Activated CD8-positive, alpha-beta T cell treated with anti-CD3 and anti-CD28 coated beads, Interleukin-2, amount 10 ng/mL, durations not matched to agents 7 days and 5 days (primary cell): ENCODE measurements at regions of chr5 and their contacts with region 1.

Region 1: GRCh38 chr5:58460732-58461286 is 923 bp upstream of the PLK2 start:
- DNase-seq: peak; percentile 91
- ATAC-seq: peak; percentile 76
- H3K4me3 Mint-ChIP-seq: peak overlapping the region; percentile 74
- H3K27ac Mint-ChIP-seq: peak overlapping the region; percentile 30
- H3K4me1 Mint-ChIP-seq: peaks cover 24% of the 10 kb centered on the region
- H3K27me3 Mint-ChIP-seq: peaks cover 31% of the 10 kb centered on the region

Region 2: DNA sequence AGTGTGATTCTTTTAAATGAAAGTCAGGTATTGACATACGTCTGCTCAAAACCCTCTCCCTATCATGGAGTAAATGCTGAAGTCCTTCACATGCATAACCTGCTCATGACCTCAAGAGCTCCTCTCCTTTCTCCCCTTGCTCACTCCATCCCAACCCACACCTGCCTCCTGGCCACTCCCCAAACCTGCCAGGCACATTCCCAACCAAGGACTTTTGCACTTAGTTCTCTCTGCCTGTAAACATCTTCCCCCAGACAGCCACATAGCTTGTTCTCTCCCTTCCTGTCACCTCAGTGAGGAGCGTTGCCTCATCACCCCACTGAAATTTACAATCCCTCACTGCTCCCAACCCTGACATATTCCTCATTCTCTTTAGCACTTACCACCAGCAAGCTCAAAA is 1542.8 kb before region 1 on chr5:
- CTCF ChIA-PET with region 1: no interaction called
- POLR2A ChIA-PET with region 1: no interaction called
- DNase-seq: no peak
- ATAC-seq: no peak
- H3K4me3 Mint-ChIP-seq: no peak overlapping the region
- H3K27ac Mint-ChIP-seq: peak overlapping the region; percentile 5
- H3K4me1 Mint-ChIP-seq: peaks cover 7% of the 10 kb centered on the region
- H3K27me3 Mint-ChIP-seq: no peaks in the 10 kb centered on the region

Region 3: GRCh38 chr5:57298295-57298984 is 1162.4 kb before region 1 on chr5:
- CTCF ChIA-PET with region 1: interaction called, 121 read pairs
- POLR2A ChIA-PET with region 1: no interaction called
- DNase-seq: peak; percentile 91
- ATAC-seq: peak; percentile 88
- H3K4me3 Mint-ChIP-seq: peak overlapping the region; percentile 56
- H3K27ac Mint-ChIP-seq: no peak overlapping the region
- H3K4me1 Mint-ChIP-seq: peaks cover 13% of the 10 kb centered on the region
- H3K27me3 Mint-ChIP-seq: peaks cover 4% of the 10 kb centered on the region

Region 4: DNA sequence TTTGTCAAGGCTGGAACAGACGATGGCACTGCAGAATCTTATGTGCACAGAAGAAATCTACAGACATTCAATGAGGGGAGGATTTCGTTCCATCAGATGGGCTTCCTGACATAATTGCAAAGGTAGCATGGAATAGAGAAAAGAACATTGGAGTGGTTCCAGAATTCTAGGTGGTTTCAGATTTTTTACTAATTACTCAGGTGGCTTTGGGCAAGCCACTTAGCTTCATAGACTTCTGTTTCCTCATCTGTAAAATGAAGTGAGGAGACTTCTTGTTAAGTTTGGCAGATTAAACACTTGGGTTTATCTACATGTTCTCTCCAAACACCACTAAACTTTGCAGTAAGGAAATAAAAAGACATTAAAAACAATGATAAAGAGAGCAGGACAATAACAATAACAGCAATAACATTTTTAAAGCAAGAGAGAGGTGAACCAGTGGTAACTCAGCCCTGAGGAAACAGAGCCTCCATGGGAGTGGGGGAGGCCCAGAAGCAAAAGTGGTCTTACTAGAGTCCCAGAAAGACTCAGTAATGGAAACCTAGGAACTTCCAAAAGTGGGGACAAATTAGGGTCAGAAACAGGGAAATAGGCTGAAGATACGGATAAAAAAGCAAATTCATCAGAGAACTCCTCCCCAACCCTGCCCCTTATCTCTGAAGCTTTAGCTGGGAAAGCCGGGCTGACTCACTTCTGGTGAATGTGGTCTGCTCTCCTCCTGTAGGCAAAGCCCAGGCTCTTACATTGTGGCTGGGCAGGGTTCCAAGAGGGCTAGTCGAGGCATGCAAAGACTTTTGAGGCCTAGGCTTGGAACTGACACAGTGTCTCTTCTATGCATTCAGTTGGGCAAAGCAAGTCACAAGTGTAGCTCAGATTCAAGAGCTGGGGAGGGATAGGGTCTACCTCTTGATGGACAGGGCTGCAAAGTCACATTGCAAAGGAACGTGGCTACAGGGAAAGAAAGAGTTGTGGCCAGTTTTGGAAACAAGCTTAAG is 966.4 kb before region 1 on chr5:
- CTCF ChIA-PET with region 1: interaction called, 72 read pairs
- POLR2A ChIA-PET with region 1: no interaction called
- DNase-seq: peak; percentile 46
- ATAC-seq: peak; percentile 55
- H3K4me3 Mint-ChIP-seq: peak overlapping the region; percentile 12
- H3K27ac Mint-ChIP-seq: peak overlapping the region; percentile 76
- H3K4me1 Mint-ChIP-seq: peaks cover 35% of the 10 kb centered on the region
- H3K27me3 Mint-ChIP-seq: peaks cover 13% of the 10 kb centered on the region

Region 5: GRCh38 chr5:57499262-57500050 is 961.4 kb before region 1 on chr5:
- CTCF ChIA-PET with region 1: interaction called, 72 read pairs
- POLR2A ChIA-PET with region 1: no interaction called
- DNase-seq: peak; percentile 26
- ATAC-seq: peak; percentile 70
- H3K4me3 Mint-ChIP-seq: peak overlapping the region; percentile 54
- H3K27ac Mint-ChIP-seq: no peak overlapping the region
- H3K4me1 Mint-ChIP-seq: peaks cover 33% of the 10 kb centered on the region
- H3K27me3 Mint-ChIP-seq: peaks cover 14% of the 10 kb centered on the region

Region 6: GRCh38 chr5:57650360-57651069 is 810.3 kb before region 1 on chr5:
- CTCF ChIA-PET with region 1: interaction called, 22 read pairs
- POLR2A ChIA-PET with region 1: no interaction called
- DNase-seq: peak; percentile 27
- ATAC-seq: no peak
- H3K4me3 Mint-ChIP-seq: no peak overlapping the region
- H3K27ac Mint-ChIP-seq: no peak overlapping the region
- H3K4me1 Mint-ChIP-seq: no peaks in the 10 kb centered on the region
- H3K27me3 Mint-ChIP-seq: peaks cover 3% of the 10 kb centered on the region

Region 7: DNA sequence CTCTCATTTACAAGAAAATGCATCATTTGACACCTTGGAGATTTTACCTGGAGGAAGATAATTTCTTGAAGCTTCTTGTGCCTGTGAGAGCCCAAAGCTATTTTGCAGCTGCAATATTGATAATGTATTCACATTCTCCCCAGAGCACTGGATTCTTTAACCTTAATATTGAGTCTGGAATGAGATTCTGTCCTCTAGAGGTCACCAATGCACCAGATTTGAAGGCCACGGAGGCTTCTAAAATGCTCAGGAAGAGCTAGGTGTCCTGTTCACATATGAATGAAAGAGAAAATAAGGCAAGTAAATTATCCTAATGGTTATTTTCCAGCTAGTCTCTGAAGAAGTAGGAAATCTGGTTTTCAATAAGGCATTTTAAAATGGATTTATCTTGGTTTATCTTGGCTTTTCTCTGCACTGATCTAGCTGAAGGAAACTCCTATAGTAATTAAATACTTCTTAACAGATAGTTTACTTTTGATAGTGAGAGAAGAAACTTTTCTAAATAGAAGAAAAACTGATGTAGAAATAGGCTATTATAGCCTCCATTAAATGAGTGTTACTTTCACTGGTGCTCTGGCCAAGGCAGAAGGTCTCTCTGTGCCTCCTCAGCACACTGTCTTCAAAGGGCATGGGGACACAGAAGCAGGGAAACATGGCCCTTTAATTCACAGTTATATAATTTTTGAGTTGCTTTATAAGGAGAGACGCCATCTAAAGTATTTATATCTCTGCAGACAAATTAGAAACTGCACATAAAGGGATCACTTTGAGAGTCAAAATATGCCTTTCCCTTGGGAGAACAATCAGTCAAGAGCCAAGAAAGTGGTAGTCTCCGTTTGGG is 681.2 kb before region 1 on chr5:
- CTCF ChIA-PET with region 1: interaction called, 43 read pairs
- POLR2A ChIA-PET with region 1: interaction called, 3 read pairs
- DNase-seq: peak; percentile 26
- ATAC-seq: no peak
- H3K4me3 Mint-ChIP-seq: no peak overlapping the region
- H3K27ac Mint-ChIP-seq: no peak overlapping the region
- H3K4me1 Mint-ChIP-seq: no peaks in the 10 kb centered on the region
- H3K27me3 Mint-ChIP-seq: no peaks in the 10 kb centered on the region

Region 8: DNA sequence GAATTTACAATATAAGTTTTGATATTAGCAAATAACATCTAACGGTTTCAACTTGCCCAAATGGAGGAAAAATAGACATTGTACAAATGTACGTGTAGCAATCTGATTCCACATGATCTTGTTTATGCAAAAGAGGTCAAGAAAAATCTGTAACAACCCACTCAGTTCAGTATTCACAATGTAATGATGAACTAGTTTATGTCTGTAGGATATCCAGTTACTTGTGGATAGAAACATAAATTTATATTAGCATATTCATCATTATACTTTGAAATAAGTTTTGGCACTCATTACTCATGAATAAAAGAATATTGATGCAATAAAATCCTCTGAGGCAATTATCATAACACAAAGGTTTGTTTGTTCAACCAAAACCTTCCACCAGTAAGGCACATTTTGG is 29.0 kb before region 1 on chr5:
- CTCF ChIA-PET with region 1: no interaction called
- POLR2A ChIA-PET with region 1: no interaction called
- DNase-seq: no peak
- ATAC-seq: no peak
- H3K4me3 Mint-ChIP-seq: no peak overlapping the region
- H3K27ac Mint-ChIP-seq: no peak overlapping the region
- H3K4me1 Mint-ChIP-seq: no peaks in the 10 kb centered on the region
- H3K27me3 Mint-ChIP-seq: no peaks in the 10 kb centered on the region

Region 9: GRCh38 chr5:58447226-58447625 is 13.6 kb before region 1 on chr5:
- CTCF ChIA-PET with region 1: interaction called, 11 read pairs
- POLR2A ChIA-PET with region 1: interaction called, 3 read pairs
- DNase-seq: no peak
- ATAC-seq: no peak
- H3K4me3 Mint-ChIP-seq: no peak overlapping the region
- H3K27ac Mint-ChIP-seq: no peak overlapping the region
- H3K4me1 Mint-ChIP-seq: no peaks in the 10 kb centered on the region
- H3K27me3 Mint-ChIP-seq: peaks cover 3% of the 10 kb centered on the region

Region 10: GRCh38 chr5:58484505-58484904 is 23.7 kb after region 1 on chr5:
- CTCF ChIA-PET with region 1: no interaction called
- POLR2A ChIA-PET with region 1: no interaction called
- DNase-seq: no peak
- ATAC-seq: no peak
- H3K4me3 Mint-ChIP-seq: no peak overlapping the region
- H3K27ac Mint-ChIP-seq: no peak overlapping the region
- H3K4me1 Mint-ChIP-seq: no peaks in the 10 kb centered on the region
- H3K27me3 Mint-ChIP-seq: no peaks in the 10 kb centered on the region

Region 11: DNA sequence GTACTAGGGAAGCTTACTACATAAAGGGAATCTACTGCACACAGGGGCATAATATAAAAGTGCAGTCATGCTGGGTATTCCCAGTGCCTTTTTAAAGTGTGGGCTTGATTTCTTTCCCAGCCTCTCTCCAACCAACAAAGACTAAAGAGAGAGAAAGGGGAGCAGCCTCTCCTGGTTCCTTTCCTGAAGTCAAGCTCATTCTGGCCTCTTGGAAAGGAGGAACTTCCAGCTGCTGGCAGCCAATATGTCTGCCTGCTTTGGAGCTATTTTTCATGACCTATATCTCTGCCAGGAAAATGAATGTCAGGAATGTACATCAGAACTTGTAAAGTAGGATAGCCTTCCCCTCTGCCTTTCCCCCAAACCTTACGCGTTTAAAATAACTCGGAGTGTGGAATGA is 179.2 kb after region 1 on chr5:
- CTCF ChIA-PET with region 1: no interaction called
- POLR2A ChIA-PET with region 1: no interaction called
- DNase-seq: no peak
- ATAC-seq: no peak
- H3K4me3 Mint-ChIP-seq: no peak overlapping the region
- H3K27ac Mint-ChIP-seq: no peak overlapping the region
- H3K4me1 Mint-ChIP-seq: no peaks in the 10 kb centered on the region
- H3K27me3 Mint-ChIP-seq: peaks cover 2% of the 10 kb centered on the region